ENCODE measurements at regions of chr3 and their contacts with region 1.

Region 1: GRCh38 chr3:186617038-186617946 is 4.4 kb downstream of the AHSG start:
- DNase-seq: peak; percentile 75 to 85 (median 82)
- ATAC-seq: peak; percentile 98
- H3K4me3 ChIP-seq: peak overlapping the region; percentile 15; the same call in 1 of the 2 replicates
- H3K27ac ChIP-seq: no peak overlapping the region
- H3K4me1 ChIP-seq: peaks cover 3 to 10% of the 10 kb centered on the region in 2 experiments; a peak in 3 of 5 replicates
- H3K27me3 ChIP-seq: peaks cover 10 to 61% of the 10 kb centered on the region in 2 experiments; a peak in 4 of 5 replicates
- CTCF ChIP-seq: peak; percentile 88 to 92 (median 92)
- EP300 ChIP-seq: no peak
- POLR2A ChIP-seq: no peak
- RAD21 ChIP-seq: peak; percentile 87 to 89

Region 2: DNA sequence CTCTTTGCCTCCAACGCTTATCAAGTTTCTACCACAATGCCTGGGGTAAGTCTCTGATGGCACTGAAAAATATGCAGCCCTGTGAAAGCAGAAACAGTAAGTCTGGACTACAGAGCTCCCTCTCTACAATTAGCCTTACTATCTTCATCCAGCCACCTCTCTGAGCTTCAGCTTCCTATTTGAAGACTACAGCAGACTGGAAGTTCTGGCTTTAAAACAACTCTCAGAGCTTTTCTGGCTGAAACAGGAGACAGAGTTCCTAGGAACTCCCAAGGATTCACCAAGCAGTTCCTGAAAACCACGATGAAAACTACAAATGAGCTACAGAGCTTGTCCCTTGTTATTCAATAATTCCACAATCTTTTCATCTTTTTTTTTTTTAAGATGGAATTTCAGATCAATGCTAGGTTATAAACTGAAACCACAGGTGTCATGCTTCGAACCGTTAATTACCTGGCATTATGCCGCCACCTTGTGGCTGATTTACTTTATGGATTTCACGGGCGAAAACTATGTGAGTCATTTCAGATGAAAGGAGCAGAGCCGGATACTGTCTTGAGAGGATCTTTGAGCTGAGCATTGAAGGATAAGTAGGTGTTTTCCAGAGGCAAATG is 77.0 kb before region 1 on chr3:
- CTCF ChIA-PET with region 1: interaction called, 3 read pairs
- POLR2A ChIA-PET with region 1: no interaction called
- in situ Hi-C with region 1: no loop called
- intact Hi-C with region 1: loop called (anchors 10 kb)
- DNase-seq: peak; percentile 58 to 82 (median 63)
- ATAC-seq: peak; percentile 94
- H3K4me3 ChIP-seq: no peak overlapping the region
- H3K27ac ChIP-seq: no peak overlapping the region
- H3K4me1 ChIP-seq: peaks cover 0 to 7% of the 10 kb centered on the region in 2 experiments; a peak in 1 of 5 replicates
- H3K27me3 ChIP-seq: no peaks in the 10 kb centered on the region
- CTCF ChIP-seq: peak; percentile 63 to 90 (median 78)
- EP300 ChIP-seq: no peak
- POLR2A ChIP-seq: no peak
- RAD21 ChIP-seq: peak; percentile 80 to 82

Region 3: GRCh38 chr3:186589121-186589520 is 28.2 kb before region 1 on chr3:
- CTCF ChIA-PET with region 1: interaction called, 12 read pairs
- POLR2A ChIA-PET with region 1: interaction called, 3 read pairs
- in situ Hi-C with region 1: no loop called
- intact Hi-C with region 1: loop called (anchors 5 kb)
- DNase-seq: peak; percentile 32 to 46 (median 34)
- ATAC-seq: peak; percentile 71
- H3K4me3 ChIP-seq: no peak overlapping the region
- H3K27ac ChIP-seq: no peak overlapping the region
- H3K4me1 ChIP-seq: peaks cover 0 to 26% of the 10 kb centered on the region in 2 experiments; a peak in 3 of 5 replicates
- H3K27me3 ChIP-seq: no peaks in the 10 kb centered on the region
- CTCF ChIP-seq: peak; percentile 52 to 81 (median 63)
- EP300 ChIP-seq: no peak
- POLR2A ChIP-seq: no peak
- RAD21 ChIP-seq: peak; percentile 50 to 59

Region 4: GRCh38 chr3:186760141-186760813 is 143.0 kb after region 1 on chr3:
- CTCF ChIA-PET with region 1: no interaction called
- POLR2A ChIA-PET with region 1: no interaction called
- in situ Hi-C with region 1: loop called (anchors 10 kb)
- intact Hi-C with region 1: no loop called
- DNase-seq: no peak
- ATAC-seq: no peak
- H3K4me3 ChIP-seq: no peak overlapping the region
- H3K27ac ChIP-seq: no peak overlapping the region
- H3K4me1 ChIP-seq: peaks cover 0 to 2% of the 10 kb centered on the region in 2 experiments; a peak in 2 of 5 replicates
- H3K27me3 ChIP-seq: peaks cover 2 to 11% of the 10 kb centered on the region in 2 experiments; a peak in 3 of 5 replicates
- CTCF ChIP-seq: no peak
- EP300 ChIP-seq: no peak
- POLR2A ChIP-seq: no peak
- RAD21 ChIP-seq: no peak

Region 5: GRCh38 chr3:186821429-186822367 is 204.4 kb after region 1 on chr3:
- CTCF ChIA-PET with region 1: interaction called, 13 read pairs
- POLR2A ChIA-PET with region 1: interaction called, 5 read pairs
- in situ Hi-C with region 1: loop called (anchors 5 kb)
- intact Hi-C with region 1: loop called (anchors 1 kb)
- DNase-seq: peak in 3 of 4 experiments; percentile 26 to 76 (median 36)
- ATAC-seq: no peak
- H3K4me3 ChIP-seq: no peak overlapping the region
- H3K27ac ChIP-seq: no peak overlapping the region
- H3K4me1 ChIP-seq: peaks cover 19 to 25% of the 10 kb centered on the region in 2 experiments; a peak in 4 of 5 replicates
- H3K27me3 ChIP-seq: no peaks in the 10 kb centered on the region
- CTCF ChIP-seq: peak; percentile 54 to 84 (median 67); a peak in 5 of 6 replicates
- EP300 ChIP-seq: no peak
- POLR2A ChIP-seq: no peak
- RAD21 ChIP-seq: peak; percentile 74 to 84